ENCODE measurements at regions of chr15 and their contacts with region 1.

Region 1: DNA sequence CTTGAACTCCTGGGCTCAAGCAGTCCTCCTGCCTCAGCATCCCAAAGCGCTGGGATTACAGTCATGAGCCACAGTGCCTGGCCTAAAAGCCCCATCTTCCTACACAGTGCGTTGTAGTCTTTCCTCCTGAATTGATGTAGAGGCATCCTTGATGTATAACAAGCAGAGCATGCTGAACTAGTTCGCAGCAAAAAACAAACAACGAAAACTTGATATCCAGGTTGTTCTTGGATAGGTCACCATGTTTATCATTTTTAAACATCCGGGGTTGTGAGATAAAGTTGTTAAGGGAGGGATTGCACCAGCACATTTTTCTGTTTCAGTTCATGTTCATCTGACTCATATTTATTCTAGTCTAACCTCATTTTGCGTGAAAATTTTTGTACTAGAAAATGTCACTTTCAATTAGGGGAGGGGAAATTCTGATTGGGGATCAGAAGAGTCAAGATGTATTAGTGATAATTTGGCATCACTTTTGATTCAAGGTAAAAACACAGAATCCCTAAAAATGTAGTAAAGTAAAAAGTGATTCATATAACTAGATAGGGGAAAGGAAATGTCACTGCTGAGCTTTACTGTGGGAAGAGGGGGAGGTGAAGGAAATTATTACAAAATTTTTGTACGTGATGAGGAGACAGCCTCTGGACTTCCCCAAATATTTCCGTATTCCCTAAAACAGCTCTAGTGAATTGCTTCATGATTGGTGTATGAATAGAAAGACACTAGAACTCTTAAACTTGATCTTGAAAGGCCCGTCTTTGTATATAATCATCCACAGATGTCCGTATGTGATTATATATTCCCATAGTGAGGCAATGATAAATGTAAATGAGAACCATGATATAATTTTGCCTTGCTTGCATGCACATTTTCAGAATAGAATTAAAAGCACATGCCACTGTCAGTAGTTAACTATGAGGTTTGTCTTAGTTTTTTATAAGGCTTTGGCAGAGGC is 22.9 kb downstream of the RAB8B start:
- DNase-seq: no peak
- ATAC-seq: peak; percentile 59
- H3K4me3 Mint-ChIP-seq: peak overlapping the region; percentile 76
- H3K27ac Mint-ChIP-seq: peak overlapping the region; percentile 94
- H3K4me1 Mint-ChIP-seq: peaks cover 77% of the 10 kb centered on the region
- H3K27me3 Mint-ChIP-seq: no peaks in the 10 kb centered on the region
- CTCF ChIP-seq: no peak

Region 2: GRCh38 chr15:63122002-63122893 is 90.1 kb before region 1 on chr15:
- CTCF ChIA-PET with region 1: no interaction called
- POLR2A ChIA-PET with region 1: no interaction called
- intact Hi-C with region 1: loop called (anchors 5 kb)
- DNase-seq: peak; percentile 77
- ATAC-seq: peak; percentile 88
- H3K4me3 Mint-ChIP-seq: peak overlapping the region; percentile 86
- H3K27ac Mint-ChIP-seq: peak overlapping the region; percentile 86
- H3K4me1 Mint-ChIP-seq: peaks cover 15% of the 10 kb centered on the region
- H3K27me3 Mint-ChIP-seq: no peaks in the 10 kb centered on the region
- CTCF ChIP-seq: no peak

Region 3: GRCh38 chr15:63195569-63196015 is 16.7 kb before region 1 on chr15:
- CTCF ChIA-PET with region 1: interaction called, 3 read pairs
- POLR2A ChIA-PET with region 1: interaction called, 17 read pairs
- intact Hi-C with region 1: loop called (anchors 1 kb)
- DNase-seq: no peak
- ATAC-seq: no peak
- H3K4me3 Mint-ChIP-seq: peak overlapping the region; percentile 56
- H3K27ac Mint-ChIP-seq: peak overlapping the region; percentile 68
- H3K4me1 Mint-ChIP-seq: peaks cover 91% of the 10 kb centered on the region
- H3K27me3 Mint-ChIP-seq: no peaks in the 10 kb centered on the region
- CTCF ChIP-seq: no peak

Region 4: DNA sequence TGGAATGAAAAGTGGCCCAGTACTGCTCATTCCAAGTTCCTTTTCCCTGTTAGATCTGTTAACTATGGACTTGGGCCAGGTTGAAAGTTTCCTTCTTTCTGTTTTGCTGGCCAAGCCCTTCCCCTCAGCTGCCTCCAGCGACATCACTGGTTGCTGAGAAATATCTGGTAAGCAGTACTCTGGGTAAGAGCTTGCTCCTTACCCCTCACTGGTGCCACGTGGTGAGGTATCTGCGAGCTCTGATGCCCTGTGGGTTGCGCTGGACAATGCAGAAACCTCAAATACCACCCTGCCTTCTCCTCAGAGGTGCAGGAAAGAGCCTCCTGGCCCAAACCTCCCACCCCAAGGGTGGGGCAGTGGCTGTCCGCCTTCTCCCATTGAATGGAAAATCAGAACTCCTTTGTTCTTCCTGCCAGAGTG is 22.1 kb after region 1 on chr15:
- CTCF ChIA-PET with region 1: no interaction called
- POLR2A ChIA-PET with region 1: no interaction called
- intact Hi-C with region 1: loop called (anchors 2 kb)
- DNase-seq: no peak
- ATAC-seq: no peak
- H3K4me3 Mint-ChIP-seq: peak overlapping the region; percentile 56
- H3K27ac Mint-ChIP-seq: peak overlapping the region; percentile 59
- H3K4me1 Mint-ChIP-seq: peaks cover 68% of the 10 kb centered on the region
- H3K27me3 Mint-ChIP-seq: no peaks in the 10 kb centered on the region
- CTCF ChIP-seq: no peak

Measured in activated B cell treated with CpG ODN at 0.5 μM for 24 hours (primary cell).